Upper lobe of right lung (tissue), 1 donor: ENCODE measurements at regions of chr5 and their contacts with region 1.

Region 1: DNA sequence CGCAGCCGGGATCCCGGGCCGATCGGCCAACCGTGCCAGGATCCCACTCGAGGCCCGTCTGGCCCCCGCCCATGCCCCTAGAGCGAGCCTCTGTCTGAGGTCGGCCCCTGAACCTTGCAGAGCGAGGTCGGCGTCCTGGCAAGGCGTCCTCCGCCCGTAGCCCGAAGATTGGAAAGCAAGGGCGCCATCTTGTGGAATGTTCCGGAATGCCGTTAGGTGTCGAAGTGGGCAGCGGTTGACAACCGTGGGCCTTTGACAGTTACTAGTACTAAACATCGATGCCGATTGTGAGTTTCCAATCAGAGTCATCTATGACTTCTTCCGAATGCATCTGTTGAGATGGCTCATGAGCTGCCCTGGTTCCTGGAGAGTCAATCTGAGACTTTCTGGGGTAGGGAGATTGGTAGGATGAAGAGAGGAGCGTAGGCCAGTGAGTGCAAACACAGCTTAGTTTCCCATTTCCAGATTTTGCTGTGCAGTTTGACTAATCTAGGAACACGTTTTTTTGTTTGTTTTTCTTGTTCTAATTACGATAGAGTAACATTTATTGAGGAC is 923 bp upstream of the PLK2 start:
- DNase-seq: peak; percentile 93
- ATAC-seq: peak; percentile 89
- H3K4me3 ChIP-seq: peak overlapping the region; percentile 80
- H3K27ac ChIP-seq: peak overlapping the region; percentile 96
- H3K4me1 ChIP-seq: peaks cover 2% of the 10 kb centered on the region
- H3K27me3 ChIP-seq: no peaks in the 10 kb centered on the region
- CTCF ChIP-seq: peak; percentile 80

Region 2: DNA sequence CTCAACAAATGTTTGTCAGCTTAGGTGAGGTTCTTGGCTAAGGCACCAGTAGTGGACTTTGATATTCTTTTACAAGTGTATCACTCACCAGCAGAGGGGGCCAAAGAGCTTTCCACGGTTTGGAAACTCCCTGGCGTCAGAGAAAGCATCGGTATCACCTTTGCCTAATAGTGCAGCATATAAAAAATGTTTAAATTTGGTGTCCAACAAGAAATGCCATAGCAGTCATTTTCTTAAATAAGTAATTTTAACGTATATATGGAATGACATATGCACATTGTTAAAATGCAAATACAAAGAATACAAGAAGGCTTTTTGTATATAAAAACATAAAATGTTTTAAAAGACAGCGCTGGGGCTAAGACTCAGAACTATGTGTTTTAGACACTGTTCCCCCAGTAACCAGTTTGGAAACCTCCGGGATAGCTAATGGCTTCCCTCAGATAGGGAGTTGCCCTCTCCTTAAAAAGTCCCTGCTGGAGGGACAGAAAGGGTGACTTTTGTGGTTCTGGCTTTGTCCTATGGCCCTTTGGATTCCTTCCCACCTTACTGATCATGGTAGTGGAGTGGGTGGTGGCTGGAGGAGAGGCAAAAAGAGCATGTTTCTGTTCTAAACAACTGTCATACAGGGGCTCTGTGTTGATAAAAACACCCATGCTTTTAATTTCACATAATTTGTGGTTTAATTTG is 1162.4 kb before region 1 on chr5:
- intact Hi-C with region 1: loop called (anchors 10 kb)
- DNase-seq: no peak
- ATAC-seq: peak; percentile 93
- H3K4me3 ChIP-seq: no peak overlapping the region
- H3K27ac ChIP-seq: no peak overlapping the region
- H3K4me1 ChIP-seq: peaks cover 10% of the 10 kb centered on the region
- H3K27me3 ChIP-seq: no peaks in the 10 kb centered on the region
- CTCF ChIP-seq: peak; percentile 82

Region 3: DNA sequence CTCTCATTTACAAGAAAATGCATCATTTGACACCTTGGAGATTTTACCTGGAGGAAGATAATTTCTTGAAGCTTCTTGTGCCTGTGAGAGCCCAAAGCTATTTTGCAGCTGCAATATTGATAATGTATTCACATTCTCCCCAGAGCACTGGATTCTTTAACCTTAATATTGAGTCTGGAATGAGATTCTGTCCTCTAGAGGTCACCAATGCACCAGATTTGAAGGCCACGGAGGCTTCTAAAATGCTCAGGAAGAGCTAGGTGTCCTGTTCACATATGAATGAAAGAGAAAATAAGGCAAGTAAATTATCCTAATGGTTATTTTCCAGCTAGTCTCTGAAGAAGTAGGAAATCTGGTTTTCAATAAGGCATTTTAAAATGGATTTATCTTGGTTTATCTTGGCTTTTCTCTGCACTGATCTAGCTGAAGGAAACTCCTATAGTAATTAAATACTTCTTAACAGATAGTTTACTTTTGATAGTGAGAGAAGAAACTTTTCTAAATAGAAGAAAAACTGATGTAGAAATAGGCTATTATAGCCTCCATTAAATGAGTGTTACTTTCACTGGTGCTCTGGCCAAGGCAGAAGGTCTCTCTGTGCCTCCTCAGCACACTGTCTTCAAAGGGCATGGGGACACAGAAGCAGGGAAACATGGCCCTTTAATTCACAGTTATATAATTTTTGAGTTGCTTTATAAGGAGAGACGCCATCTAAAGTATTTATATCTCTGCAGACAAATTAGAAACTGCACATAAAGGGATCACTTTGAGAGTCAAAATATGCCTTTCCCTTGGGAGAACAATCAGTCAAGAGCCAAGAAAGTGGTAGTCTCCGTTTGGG is 681.2 kb before region 1 on chr5:
- intact Hi-C with region 1: loop called (anchors 5 kb)
- DNase-seq: no peak
- ATAC-seq: peak; percentile 86
- H3K4me3 ChIP-seq: no peak overlapping the region
- H3K27ac ChIP-seq: no peak overlapping the region
- H3K4me1 ChIP-seq: peaks cover 18% of the 10 kb centered on the region
- H3K27me3 ChIP-seq: no peaks in the 10 kb centered on the region
- CTCF ChIP-seq: peak; percentile 64

Region 4: DNA sequence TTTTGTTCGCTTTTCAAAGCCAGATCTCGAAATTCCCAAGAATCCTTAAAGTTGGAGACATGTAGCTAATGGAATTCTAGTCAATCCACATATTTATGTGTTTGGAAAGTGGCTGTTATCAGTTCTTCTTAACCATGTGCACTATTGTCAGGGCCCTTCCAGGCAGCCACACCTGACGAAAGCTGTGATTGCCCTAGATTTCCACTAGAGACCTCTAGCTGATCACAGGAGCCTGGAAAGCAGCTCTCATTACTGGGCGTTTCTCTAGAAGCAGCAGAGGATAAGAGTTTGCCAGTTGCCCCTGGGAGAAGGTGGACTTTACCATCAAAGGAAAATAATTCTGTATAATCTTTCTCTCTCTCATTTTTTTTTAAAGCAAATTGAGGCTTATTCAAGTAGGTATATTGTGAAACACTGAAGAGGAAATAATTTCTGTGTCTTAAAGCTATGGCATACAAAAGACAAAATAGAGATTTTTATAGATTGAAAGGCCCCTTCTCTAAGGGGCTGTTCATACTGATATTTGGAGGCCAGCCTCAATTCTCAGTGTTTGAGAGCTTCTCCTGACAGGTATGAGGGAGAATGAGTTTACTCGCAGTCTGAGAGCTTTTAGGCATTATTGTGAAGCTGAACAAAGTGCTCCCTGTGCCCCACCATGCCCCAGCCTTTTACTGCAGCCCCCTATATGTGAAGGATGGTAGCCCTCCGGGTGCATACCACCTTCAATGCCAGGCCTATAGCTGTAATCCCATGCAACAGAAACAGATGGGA is 572.8 kb before region 1 on chr5:
- intact Hi-C with region 1: loop called (anchors 5 kb)
- DNase-seq: no peak
- ATAC-seq: peak; percentile 90
- H3K4me3 ChIP-seq: no peak overlapping the region
- H3K27ac ChIP-seq: no peak overlapping the region
- H3K4me1 ChIP-seq: peaks cover 5% of the 10 kb centered on the region
- H3K27me3 ChIP-seq: no peaks in the 10 kb centered on the region
- CTCF ChIP-seq: peak; percentile 60

Region 5: DNA sequence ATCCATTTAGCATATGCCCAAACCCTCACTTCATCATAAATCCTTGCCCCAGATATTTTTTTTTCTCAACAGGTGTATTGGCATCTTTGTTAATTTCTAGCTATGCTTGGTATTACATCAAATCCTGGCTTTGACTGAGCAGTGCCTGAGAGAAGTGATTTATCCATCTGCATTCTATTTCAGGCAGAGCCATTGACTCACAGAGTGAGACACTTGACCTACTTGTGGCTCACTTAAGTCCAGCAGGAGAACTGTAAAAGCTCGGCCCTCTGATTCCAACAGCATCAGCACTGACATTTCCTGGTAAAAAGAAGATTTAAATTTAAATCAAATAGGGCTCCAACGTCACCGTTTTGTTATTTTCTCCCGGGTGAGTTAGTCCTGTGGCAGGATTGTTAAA is 94.3 kb before region 1 on chr5:
- intact Hi-C with region 1: no loop called
- DNase-seq: no peak
- ATAC-seq: peak; percentile 85
- H3K4me3 ChIP-seq: no peak overlapping the region
- H3K27ac ChIP-seq: no peak overlapping the region
- H3K4me1 ChIP-seq: no peaks in the 10 kb centered on the region
- H3K27me3 ChIP-seq: no peaks in the 10 kb centered on the region
- CTCF ChIP-seq: no peak

Region 6: GRCh38 chr5:58860680-58861079 is 399.9 kb after region 1 on chr5:
- intact Hi-C with region 1: no loop called
- DNase-seq: no peak
- ATAC-seq: no peak
- H3K4me3 ChIP-seq: no peak overlapping the region
- H3K27ac ChIP-seq: no peak overlapping the region
- H3K4me1 ChIP-seq: no peaks in the 10 kb centered on the region
- H3K27me3 ChIP-seq: no peaks in the 10 kb centered on the region
- CTCF ChIP-seq: no peak